ENCODE measurements at regions of chr12 and their contacts with region 1.

Region 1: DNA sequence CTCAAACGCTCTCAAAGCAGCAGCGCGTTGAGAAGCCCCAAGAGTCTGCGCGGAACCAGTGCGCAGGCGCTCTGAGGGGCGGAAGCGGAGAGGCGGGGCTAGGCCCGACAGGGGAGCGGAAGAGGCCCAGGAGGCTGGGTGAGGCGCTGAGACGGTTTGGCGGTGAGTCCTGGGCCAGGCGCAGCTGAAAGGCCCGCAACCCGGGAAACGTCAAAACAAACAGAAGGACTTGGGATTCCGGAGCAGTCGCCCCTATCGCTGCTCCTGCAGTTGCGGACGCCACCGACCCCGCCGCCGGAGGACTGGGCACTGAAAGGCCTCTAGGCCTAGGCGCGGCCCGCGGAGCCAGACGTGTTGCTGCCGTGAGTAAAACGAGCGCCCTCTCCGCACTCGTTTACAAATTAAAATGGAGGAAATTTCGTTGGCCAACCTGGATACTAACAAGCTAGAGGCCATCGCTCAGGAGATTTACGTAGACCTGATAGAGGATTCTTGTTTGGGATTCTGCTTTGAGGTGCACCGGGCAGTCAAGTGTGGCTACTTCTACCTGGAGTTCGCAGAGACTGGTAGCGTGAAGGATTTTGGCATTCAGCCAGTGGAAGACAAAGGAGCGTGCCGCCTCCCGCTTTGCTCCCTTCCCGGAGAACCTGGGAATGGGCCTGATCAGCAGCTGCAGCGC is at the start of gene ATXN7L3B:
- DNase-seq: peak; percentile 95
- H3K4me3 ChIP-seq: peak within 1 kb of the TSS; percentile 95
- H3K27ac ChIP-seq: peak within 1 kb of the TSS; percentile 94
- H3K4me1 ChIP-seq: peaks cover 38% of the 10 kb centered on the region
- CTCF ChIP-seq: no peak
- total RNA-seq, gene ATXN7L3B: 21.5 and 22.4 TPM in 2 replicates

Region 2: GRCh38 chr12:73950507-73950906 is 587.3 kb before region 1 on chr12:
- CTCF ChIA-PET with region 1: no interaction called
- POLR2A ChIA-PET with region 1: no interaction called
- intact Hi-C with region 1: loop called (anchors 5 kb)
- DNase-seq: no peak
- H3K4me3 ChIP-seq: no peak overlapping the region
- H3K27ac ChIP-seq: no peak overlapping the region
- H3K4me1 ChIP-seq: peaks cover 20% of the 10 kb centered on the region
- CTCF ChIP-seq: no peak

Region 3: GRCh38 chr12:74614466-74614865 is 76.6 kb after region 1 on chr12:
- CTCF ChIA-PET with region 1: no interaction called
- POLR2A ChIA-PET with region 1: no interaction called
- intact Hi-C with region 1: no loop called
- DNase-seq: no peak
- H3K4me3 ChIP-seq: no peak overlapping the region
- H3K27ac ChIP-seq: no peak overlapping the region
- H3K4me1 ChIP-seq: no peaks in the 10 kb centered on the region
- CTCF ChIP-seq: no peak

Region 4: GRCh38 chr12:74626397-74626796 is 88.6 kb after region 1 on chr12:
- CTCF ChIA-PET with region 1: no interaction called
- POLR2A ChIA-PET with region 1: no interaction called
- intact Hi-C with region 1: loop called (anchors 5 kb)
- DNase-seq: peak; percentile 20
- H3K4me3 ChIP-seq: no peak overlapping the region
- H3K27ac ChIP-seq: peak overlapping the region; percentile 43
- H3K4me1 ChIP-seq: peaks cover 29% of the 10 kb centered on the region
- CTCF ChIP-seq: no peak

Region 5: GRCh38 chr12:74641715-74642114 is 103.9 kb after region 1 on chr12:
- CTCF ChIA-PET with region 1: no interaction called
- POLR2A ChIA-PET with region 1: interaction called, 3 read pairs
- intact Hi-C with region 1: loop called (anchors 5 kb)
- DNase-seq: peak; percentile 26
- H3K4me3 ChIP-seq: peak overlapping the region; percentile 32
- H3K27ac ChIP-seq: peak overlapping the region; percentile 28
- H3K4me1 ChIP-seq: peaks cover 26% of the 10 kb centered on the region
- CTCF ChIP-seq: no peak

Region 6: GRCh38 chr12:74663958-74664357 is 126.1 kb after region 1 on chr12:
- CTCF ChIA-PET with region 1: no interaction called
- POLR2A ChIA-PET with region 1: no interaction called
- intact Hi-C with region 1: no loop called
- DNase-seq: no peak
- H3K4me3 ChIP-seq: no peak overlapping the region
- H3K27ac ChIP-seq: no peak overlapping the region
- H3K4me1 ChIP-seq: no peaks in the 10 kb centered on the region
- CTCF ChIP-seq: no peak